ENCODE measurements at regions of chr4 and their contacts with region 1.

Region 1: GRCh38 chr4:165131247-165131832 is 18.7 kb upstream of the TMEM192 start:
- DNase-seq: peak; percentile 65

Region 2: GRCh38 chr4:164799410-164799809 is 331.9 kb before region 1 on chr4:
- in situ Hi-C with region 1: no loop called
- DNase-seq: no peak

Region 3: GRCh38 chr4:165464813-165465381 is 333.6 kb after region 1 on chr4:
- in situ Hi-C with region 1: loop called (anchors 25 kb)
- DNase-seq: no peak

Measured in Caki2 (cell line).